HepG2 (cell line): ENCODE measurements at regions of chr17 and their contacts with region 1.

Region 1: GRCh38 chr17:74961657-74962490 is 10.7 kb downstream of the HID1 start:
- DNase-seq: peak; percentile 85
- ATAC-seq: peak; percentile 70
- H3K4me3 ChIP-seq: no peak overlapping the region
- H3K27ac ChIP-seq: no peak overlapping the region
- H3K4me1 ChIP-seq: peaks cover 6% of the 10 kb centered on the region; the same call in 1 of the 2 replicates
- H3K27me3 ChIP-seq: no peaks in the 10 kb centered on the region; a peak in 2 of 5 replicates
- CTCF ChIP-seq: peak; percentile 93
- EP300 ChIP-seq: no peak
- POLR2A ChIP-seq: no peak
- RAD21 ChIP-seq: peak; percentile 95

Region 2: DNA sequence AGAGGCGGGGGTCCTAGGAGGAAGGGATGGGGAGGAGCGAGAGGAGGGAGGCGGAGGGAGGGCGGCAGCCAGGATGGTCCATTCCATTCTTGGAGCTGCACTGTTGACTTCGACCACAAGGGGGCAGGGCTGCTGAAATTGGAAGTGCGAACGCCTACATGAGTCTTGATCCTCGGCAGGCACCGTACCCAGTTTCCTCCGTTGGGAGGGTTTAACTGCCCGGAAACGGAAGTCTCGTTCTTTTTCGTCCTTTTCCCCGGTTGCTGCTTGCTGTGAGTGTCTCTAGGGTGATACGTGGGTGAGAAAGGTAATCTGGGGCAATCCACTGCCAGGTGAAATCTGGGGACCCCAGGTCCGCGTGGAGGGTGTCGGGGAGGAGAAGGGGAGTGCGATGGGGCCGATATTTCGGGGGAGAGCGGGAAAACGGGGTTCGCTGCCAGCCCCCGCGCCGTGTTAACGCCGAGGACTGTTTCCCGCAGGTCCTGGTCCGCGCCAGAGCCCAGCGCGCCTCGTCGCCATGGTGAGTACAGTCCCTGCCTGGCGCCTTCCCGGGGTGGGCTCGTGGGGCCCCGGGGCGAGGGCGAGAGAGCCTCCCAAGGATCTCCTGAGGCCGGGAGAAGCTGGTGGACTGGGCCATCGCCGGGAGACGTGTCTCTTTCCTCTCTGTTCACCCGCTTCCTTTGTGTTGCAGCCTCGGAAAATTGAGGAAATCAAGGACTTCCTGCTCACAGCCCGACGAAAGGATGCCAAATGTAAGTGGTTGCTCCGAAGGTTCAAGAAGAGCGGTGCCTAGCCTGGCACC is 758.2 kb before region 1 on chr17 and contains the start of gene RPL38:
- CTCF ChIA-PET with region 1: no interaction called
- POLR2A ChIA-PET with region 1: no interaction called
- in situ Hi-C with region 1: no loop called
- intact Hi-C with region 1: no loop called
- DNase-seq: peak; percentile 98
- ATAC-seq: peak; percentile 78
- H3K4me3 ChIP-seq: peak within 1 kb of the TSS; percentile 92 to 99 (median 97)
- H3K27ac ChIP-seq: peak within 1 kb of the TSS; percentile 78
- H3K4me1 ChIP-seq: peaks cover 28% of the 10 kb centered on the region
- H3K27me3 ChIP-seq: peaks cover 18 to 48% of the 10 kb centered on the region in 2 experiments
- CTCF ChIP-seq: peak; percentile 99
- EP300 ChIP-seq: peak in 1 of 2 experiments; percentile 59; a peak in 2 of 4 replicates
- POLR2A ChIP-seq: peak; percentile 98 to 99
- RAD21 ChIP-seq: peak; percentile 50
- total RNA-seq, gene RPL38: 2,370 and 2,621 TPM in 2 replicates

Region 3: GRCh38 chr17:74923533-74924249 is 38.2 kb before region 1 on chr17:
- CTCF ChIA-PET with region 1: interaction called, 32 read pairs
- POLR2A ChIA-PET with region 1: interaction called, 3 read pairs
- in situ Hi-C with region 1: loop called (anchors 5 kb)
- intact Hi-C with region 1: loop called (anchors 1 kb)
- DNase-seq: no peak
- ATAC-seq: peak; percentile 63
- H3K4me3 ChIP-seq: peak overlapping the region; percentile 30 to 53 (median 35); a peak in 4 of 6 replicates
- H3K27ac ChIP-seq: no peak overlapping the region
- H3K4me1 ChIP-seq: peaks cover 23% of the 10 kb centered on the region
- H3K27me3 ChIP-seq: peaks cover 23 to 79% of the 10 kb centered on the region in 2 experiments
- CTCF ChIP-seq: peak; percentile 91
- EP300 ChIP-seq: no peak
- POLR2A ChIP-seq: no peak
- RAD21 ChIP-seq: peak; percentile 89

Region 4: GRCh38 chr17:74981979-74982662 is 20.2 kb after region 1 on chr17:
- CTCF ChIA-PET with region 1: no interaction called
- POLR2A ChIA-PET with region 1: interaction called, 8 read pairs
- in situ Hi-C with region 1: no loop called
- intact Hi-C with region 1: loop called (anchors 1 kb)
- DNase-seq: peak; percentile 72
- ATAC-seq: peak; percentile 97
- H3K4me3 ChIP-seq: peak overlapping the region; percentile 72 to 88 (median 76)
- H3K27ac ChIP-seq: peak overlapping the region; percentile 29
- H3K4me1 ChIP-seq: peaks cover 32% of the 10 kb centered on the region
- H3K27me3 ChIP-seq: peaks cover 0 to 16% of the 10 kb centered on the region in 2 experiments; a peak in 3 of 5 replicates
- CTCF ChIP-seq: peak; percentile 62
- EP300 ChIP-seq: no peak; a peak in 1 of 4 replicates
- POLR2A ChIP-seq: peak; percentile 74 to 95
- RAD21 ChIP-seq: peak; percentile 71

Region 5: DNA sequence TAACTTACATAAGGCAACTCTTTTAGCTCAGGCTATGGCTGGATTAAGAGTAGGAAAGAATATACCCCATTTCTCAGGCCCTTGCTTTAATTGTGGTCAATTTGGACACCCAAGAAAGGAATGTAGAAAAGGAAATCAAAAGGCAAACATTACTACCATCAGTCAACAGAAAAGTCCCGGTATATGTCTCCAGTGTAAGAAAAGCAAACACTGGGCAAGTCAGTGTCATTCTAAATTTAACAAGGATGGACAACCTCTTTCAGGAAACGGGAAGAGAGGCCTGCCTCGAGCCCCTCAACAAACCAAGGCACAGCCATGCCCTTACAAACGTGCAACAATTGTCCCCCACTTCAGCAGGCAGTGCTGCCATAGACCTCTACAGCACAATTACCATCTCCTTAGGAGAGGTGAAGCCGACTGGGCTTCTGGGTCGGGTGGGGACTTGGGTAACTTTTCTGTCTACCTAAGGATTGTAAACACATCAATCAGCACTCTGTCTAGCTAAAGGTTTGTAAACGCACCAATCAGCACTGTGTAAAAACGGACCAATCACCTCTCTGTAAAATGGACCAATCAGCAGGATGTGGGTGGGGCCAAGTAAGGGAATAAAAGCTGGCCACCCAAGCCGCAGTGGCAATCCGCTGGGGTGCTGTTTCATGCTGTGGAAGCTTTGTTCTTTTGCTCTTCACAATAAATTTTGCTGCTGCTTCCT is 63.0 kb after region 1 on chr17:
- CTCF ChIA-PET with region 1: interaction called, 3 read pairs
- POLR2A ChIA-PET with region 1: interaction called, 10 read pairs
- in situ Hi-C with region 1: no loop called
- intact Hi-C with region 1: no loop called
- DNase-seq: peak; percentile 61
- ATAC-seq: peak; percentile 75
- H3K4me3 ChIP-seq: peak overlapping the region in 1 of 3 experiments; percentile 46; a peak in 3 of 6 replicates
- H3K27ac ChIP-seq: peak overlapping the region; percentile 43
- H3K4me1 ChIP-seq: peaks cover 25% of the 10 kb centered on the region
- H3K27me3 ChIP-seq: peaks cover 0 to 3% of the 10 kb centered on the region in 2 experiments; a peak in 1 of 5 replicates
- CTCF ChIP-seq: no peak
- EP300 ChIP-seq: no peak
- POLR2A ChIP-seq: peak; percentile 56 to 60; a peak in 2 of 4 replicates
- RAD21 ChIP-seq: no peak

Region 6: GRCh38 chr17:75412455-75413317 is 450.8 kb after region 1 on chr17:
- CTCF ChIA-PET with region 1: no interaction called
- POLR2A ChIA-PET with region 1: no interaction called
- in situ Hi-C with region 1: loop called (anchors 10 kb)
- intact Hi-C with region 1: no loop called
- DNase-seq: peak; percentile 79
- ATAC-seq: peak; percentile 78
- H3K4me3 ChIP-seq: peak overlapping the region in 1 of 3 experiments; percentile 35; a peak in 1 of 6 replicates
- H3K27ac ChIP-seq: no peak overlapping the region
- H3K4me1 ChIP-seq: peaks cover 33% of the 10 kb centered on the region
- H3K27me3 ChIP-seq: peaks cover 0 to 5% of the 10 kb centered on the region in 2 experiments; a peak in 1 of 5 replicates
- CTCF ChIP-seq: peak; percentile 98
- EP300 ChIP-seq: no peak
- POLR2A ChIP-seq: no peak
- RAD21 ChIP-seq: peak; percentile 96